Activated naive CD4-positive, alpha-beta T cell treated with anti-CD3 and anti-CD28 coated beads, Interleukin-2, amount 10 ng/mL, durations not matched to agents 7 days and 5 days (primary cell): ENCODE measurements at regions of chr20 and their contacts with region 1.

Region 1: DNA sequence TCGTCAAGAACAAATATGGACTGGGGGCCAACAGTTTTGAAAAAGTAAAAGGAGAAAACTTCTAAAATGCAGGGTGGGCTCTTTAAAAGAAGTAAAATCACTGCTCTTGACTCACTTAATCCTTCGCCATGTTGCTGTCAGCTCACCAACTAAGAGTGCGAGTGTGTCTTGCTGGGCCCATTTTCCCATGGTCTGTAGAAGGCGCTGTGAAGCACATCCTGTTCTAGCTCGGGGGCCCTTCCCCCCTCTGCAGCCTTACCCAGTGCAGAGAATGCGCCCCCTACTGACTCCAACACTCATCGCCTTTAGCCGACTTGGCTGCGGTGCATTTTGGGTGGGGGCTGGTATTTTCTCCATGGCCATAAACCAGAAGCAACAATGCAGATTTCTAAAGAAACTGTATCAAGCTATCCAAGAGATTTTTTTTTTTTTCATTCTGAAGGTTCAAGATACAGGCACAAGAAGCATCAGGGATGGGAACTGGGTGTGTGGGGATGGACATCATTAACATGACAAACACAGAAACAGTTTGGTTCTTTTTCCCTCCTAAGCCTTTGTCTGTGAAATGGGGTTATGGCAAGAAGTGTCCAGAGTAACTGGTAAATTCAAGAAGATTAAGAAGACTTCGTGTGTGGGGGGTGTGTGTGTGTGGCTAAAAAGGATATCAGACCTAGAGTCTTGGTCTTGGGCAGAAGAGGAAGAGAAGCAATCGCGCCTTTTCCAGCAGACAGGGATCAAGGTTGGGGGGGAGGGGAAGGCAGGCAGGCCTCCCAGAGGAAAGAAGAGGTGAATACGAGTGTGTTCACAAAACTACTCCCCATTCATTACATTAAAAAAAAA is 1.7 kb downstream of the ADNP start:
- DNase-seq: peak; percentile 97
- H3K4me3 Mint-ChIP-seq: peak overlapping the region; percentile 93
- H3K27ac Mint-ChIP-seq: peak overlapping the region; percentile 98
- H3K4me1 Mint-ChIP-seq: peaks cover 61% of the 10 kb centered on the region
- H3K27me3 Mint-ChIP-seq: no peaks in the 10 kb centered on the region

Region 2: DNA sequence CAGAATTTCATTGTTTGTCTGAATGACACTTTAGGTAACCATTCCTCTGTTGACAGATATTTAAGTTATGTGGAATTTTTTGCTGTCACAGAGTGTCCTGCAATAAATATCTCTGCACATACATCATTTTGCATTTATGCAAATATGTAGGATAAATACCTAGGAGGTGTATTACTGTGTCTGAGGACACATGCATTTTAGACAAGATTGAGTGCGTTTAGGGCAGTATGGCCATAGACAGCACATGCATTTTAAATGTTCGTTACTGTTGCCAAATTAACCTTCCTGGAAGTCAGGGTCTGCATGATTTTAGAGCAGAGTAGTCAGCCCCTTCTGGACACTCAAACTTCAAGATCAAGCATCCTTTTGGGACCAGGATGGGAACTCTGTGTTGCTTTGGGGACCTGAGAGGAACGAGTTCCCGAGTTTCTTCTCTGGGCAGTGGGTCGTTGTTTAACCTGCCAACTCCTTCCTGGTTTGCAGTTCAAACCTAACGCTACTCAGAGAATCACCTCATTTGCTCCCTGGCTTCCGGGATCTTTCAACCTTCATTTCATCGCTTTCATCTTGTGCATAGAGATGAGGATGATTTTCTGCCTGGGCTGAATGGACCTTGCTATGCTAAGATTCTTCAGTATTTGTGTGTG is 125.0 kb before region 1 on chr20:
- CTCF ChIA-PET with region 1: interaction called, 11 read pairs
- DNase-seq: peak; percentile 58
- H3K4me3 Mint-ChIP-seq: peak overlapping the region; percentile 16
- H3K27ac Mint-ChIP-seq: peak overlapping the region; percentile 84
- H3K4me1 Mint-ChIP-seq: peaks cover 25% of the 10 kb centered on the region
- H3K27me3 Mint-ChIP-seq: no peaks in the 10 kb centered on the region

Region 3: GRCh38 chr20:50885781-50886486 is 43.6 kb before region 1 on chr20:
- CTCF ChIA-PET with region 1: interaction called, 14 read pairs
- DNase-seq: no peak
- H3K4me3 Mint-ChIP-seq: no peak overlapping the region
- H3K27ac Mint-ChIP-seq: no peak overlapping the region
- H3K4me1 Mint-ChIP-seq: no peaks in the 10 kb centered on the region
- H3K27me3 Mint-ChIP-seq: no peaks in the 10 kb centered on the region

Region 4: GRCh38 chr20:50913690-50914375 is 15.7 kb before region 1 on chr20:
- CTCF ChIA-PET with region 1: interaction called, 31 read pairs
- DNase-seq: no peak
- H3K4me3 Mint-ChIP-seq: no peak overlapping the region
- H3K27ac Mint-ChIP-seq: no peak overlapping the region
- H3K4me1 Mint-ChIP-seq: peaks cover 60% of the 10 kb centered on the region
- H3K27me3 Mint-ChIP-seq: no peaks in the 10 kb centered on the region